Right lobe of liver (tissue), 6 donors: ENCODE measurements at regions of chr2 and their contacts with region 1.

Region 1: DNA sequence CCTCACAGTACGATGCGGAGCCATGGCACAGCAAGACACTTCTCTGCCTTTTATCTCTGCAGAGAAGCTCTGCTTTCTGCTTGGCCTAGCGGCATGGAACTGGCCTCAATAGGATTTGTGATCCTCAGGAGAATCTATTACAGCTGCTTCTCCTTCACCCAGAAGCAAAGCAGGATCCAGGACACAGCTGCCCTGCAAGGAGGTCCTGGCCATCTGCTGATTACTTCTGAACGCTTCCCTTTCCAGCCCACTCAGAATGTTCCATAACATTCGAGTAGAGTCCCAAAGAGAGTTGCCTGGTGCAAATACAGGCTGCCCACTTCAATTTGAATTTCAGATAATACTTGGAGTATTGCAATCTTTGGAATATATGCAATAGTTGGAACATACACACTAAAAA is 29.2 kb upstream of the KCNS3 start:
- DNase-seq: no peak
- ATAC-seq: no peak
- H3K4me3 ChIP-seq: no peak overlapping the region
- H3K27ac ChIP-seq: no peak overlapping the region
- H3K4me1 ChIP-seq: no peaks in the 10 kb centered on the region
- H3K27me3 ChIP-seq: no peaks in the 10 kb centered on the region
- CTCF ChIP-seq: no peak
- POLR2A ChIP-seq: no peak

Region 2: DNA sequence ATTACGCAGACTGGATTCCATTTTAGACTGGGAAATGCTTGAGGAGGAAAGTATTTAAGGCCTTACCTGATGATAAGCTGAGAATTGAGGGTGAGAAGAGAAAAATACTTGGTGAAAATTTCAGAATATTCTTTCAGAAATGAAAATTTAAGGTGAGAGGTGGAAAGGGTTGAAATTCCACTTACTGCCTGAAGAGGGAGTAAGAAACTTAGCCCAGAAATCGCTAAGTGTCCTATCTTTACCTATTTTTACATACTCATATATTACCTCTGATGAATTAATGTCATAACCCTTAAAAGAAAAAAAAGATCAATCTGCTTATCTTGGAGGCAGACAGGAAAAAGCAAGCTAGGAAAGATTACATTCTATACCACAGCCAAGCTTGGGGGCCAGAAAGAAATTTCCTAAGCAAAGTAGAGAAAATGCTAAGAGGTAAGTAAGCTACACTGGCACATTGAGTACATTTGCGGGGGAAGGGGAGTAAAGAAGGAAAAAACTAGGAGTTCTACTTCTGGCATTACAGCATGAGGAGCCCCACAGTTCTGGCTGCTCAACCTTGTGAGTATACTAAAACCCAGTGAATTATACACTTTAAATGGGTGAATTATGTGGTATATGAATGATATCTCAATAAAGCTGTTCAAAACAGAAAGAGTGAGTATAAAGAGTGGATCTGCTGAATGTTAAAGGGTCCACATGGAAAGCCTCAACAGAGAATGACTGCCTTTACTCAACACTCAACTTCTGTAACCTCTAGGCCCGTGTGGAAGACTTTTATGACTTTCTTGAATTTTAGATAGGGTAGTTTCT is 129.5 kb before region 1 on chr2:
- intact Hi-C with region 1: loop called in 1 of 2 experiments (anchors 10 kb)
- DNase-seq: no peak
- ATAC-seq: peak; percentile 66 to 74 (median 70)
- H3K4me3 ChIP-seq: no peak overlapping the region
- H3K27ac ChIP-seq: no peak overlapping the region
- H3K4me1 ChIP-seq: no peaks in the 10 kb centered on the region
- H3K27me3 ChIP-seq: no peaks in the 10 kb centered on the region
- CTCF ChIP-seq: peak; percentile 67 to 83 (median 81)
- POLR2A ChIP-seq: no peak

Region 3: GRCh38 chr2:18378020-18378653 is 528.9 kb after region 1 on chr2:
- intact Hi-C with region 1: loop called in 1 of 2 experiments (anchors 10 kb)
- DNase-seq: no peak
- ATAC-seq: peak; percentile 72 to 81 (median 74)
- H3K4me3 ChIP-seq: no peak overlapping the region
- H3K27ac ChIP-seq: no peak overlapping the region
- H3K4me1 ChIP-seq: no peaks in the 10 kb centered on the region
- H3K27me3 ChIP-seq: peaks cover 0 to 11% of the 10 kb centered on the region in 2 donors
- CTCF ChIP-seq: peak; percentile 63 to 88 (median 82)
- POLR2A ChIP-seq: no peak